Posterior vena cava (tissue), 2 donors: ENCODE measurements at regions of chr21 and their contacts with region 1.

Region 1: DNA sequence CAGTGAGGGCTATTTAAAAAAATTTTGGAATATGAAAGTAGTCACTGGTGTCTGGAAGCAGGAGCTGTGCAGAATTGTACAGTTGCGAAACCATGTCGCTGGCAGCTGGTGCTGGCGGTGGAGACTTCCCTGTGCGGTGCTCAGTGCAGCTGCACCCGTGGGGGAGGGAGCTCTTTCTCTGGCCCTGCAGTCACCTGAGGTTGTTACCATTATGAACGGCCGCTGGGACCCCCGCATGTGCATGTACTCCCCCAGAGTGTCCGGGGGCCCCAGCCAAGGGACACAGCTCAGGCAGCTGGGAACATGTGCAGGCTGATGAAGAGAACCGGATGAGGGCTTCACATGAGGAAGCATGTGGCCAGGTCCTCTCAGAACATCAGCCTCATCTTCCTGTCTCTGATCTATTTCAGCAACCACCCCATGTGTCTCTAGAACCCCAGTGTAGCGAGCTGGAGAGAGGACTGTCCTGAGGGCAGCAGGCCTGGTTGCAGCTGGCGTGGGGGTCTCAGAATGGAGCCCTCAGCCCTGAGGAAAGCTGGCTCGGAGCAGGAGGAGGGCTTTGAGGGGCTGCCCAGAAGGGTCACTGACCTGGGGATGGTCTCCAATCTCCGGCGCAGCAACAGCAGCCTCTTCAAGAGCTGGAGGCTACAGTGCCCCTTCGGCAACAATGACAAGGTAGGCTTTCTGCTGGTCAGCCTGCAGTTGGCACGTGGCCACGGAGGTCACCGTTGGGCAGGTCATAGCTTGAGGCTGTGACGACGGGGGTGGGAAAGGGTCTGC is at the start of gene TRPM2:
- DNase-seq: peak; percentile 92
- total RNA-seq, gene TRPM2: 7.7 to 11.3 TPM

Region 2: DNA sequence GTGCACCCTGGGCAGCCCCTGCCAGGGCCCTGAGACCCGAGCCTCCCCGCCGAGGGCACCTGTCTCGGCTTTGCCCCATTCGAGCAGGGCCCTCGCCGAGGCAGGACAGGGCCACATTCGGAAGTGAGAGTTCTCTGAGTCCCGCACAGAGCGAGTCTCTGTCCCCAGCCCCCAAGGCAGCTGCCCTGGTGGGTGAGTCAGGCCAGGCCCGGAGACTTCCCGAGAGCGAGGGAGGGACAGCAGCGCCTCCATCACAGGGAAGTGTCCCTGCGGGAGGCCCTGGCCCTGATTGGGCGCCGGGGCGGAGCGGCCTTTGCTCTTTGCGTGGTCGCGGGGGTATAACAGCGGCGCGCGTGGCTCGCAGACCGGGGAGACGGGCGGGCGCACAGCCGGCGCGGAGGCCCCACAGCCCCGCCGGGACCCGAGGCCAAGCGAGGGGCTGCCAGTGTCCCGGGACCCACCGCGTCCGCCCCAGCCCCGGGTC is 67.8 kb before region 1 on chr21 and contains the start of gene AIRE:
- intact Hi-C with region 1: no loop called
- DNase-seq: peak; percentile 81
- total RNA-seq, gene AIRE: not detected

Region 3: GRCh38 chr21:44310628-44311511 is 42.5 kb before region 1 on chr21:
- intact Hi-C with region 1: no loop called
- DNase-seq: no peak

Region 4: GRCh38 chr21:44405948-44406872 is 52.8 kb after region 1 on chr21:
- intact Hi-C with region 1: loop called in 1 of 2 experiments (anchors 10 kb)
- DNase-seq: no peak

Region 5: DNA sequence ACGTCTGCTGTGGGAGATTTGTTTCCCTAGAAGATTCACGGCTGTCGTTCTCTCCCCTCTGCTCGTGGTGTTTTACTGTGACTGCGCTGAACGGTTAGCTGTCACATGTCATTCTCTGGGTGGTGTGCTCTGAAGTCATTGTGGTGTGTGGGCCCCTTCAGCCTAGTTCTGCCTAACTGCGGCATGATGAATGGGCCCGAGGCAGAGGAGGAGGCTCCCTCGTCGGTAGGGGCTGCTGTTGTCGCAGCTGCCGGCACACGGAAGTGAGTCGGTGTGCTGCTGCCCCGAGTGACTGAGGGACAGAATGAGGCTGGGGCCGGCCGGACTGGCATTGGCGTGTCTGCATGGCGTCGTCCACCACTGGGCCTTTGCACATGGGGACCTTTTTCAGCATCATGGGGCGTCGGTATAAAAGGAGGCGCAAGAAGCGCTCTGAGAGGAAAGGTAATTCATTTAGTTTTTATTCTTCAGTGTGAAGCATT is 798.9 kb after region 1 on chr21:
- intact Hi-C with region 1: no loop called
- DNase-seq: peak; percentile 86